ENCODE measurements at regions of chr1 and their contacts with region 1.

Region 1: GRCh38 chr1:61049850-61050540 is 32.4 kb upstream of the NFIA start:
- DNase-seq: peak; percentile 93
- ATAC-seq: peak; percentile 86
- H3K4me3 Mint-ChIP-seq: peak overlapping the region; percentile 65
- H3K27ac Mint-ChIP-seq: no peak overlapping the region
- H3K4me1 Mint-ChIP-seq: peaks cover 22% of the 10 kb centered on the region
- H3K27me3 Mint-ChIP-seq: peaks cover 46% of the 10 kb centered on the region

Region 2: GRCh38 chr1:61092642-61093041 is 42.6 kb after region 1 on chr1:
- CTCF ChIA-PET with region 1: interaction called, 19 read pairs
- POLR2A ChIA-PET with region 1: no interaction called
- intact Hi-C with region 1: no loop called
- DNase-seq: no peak
- ATAC-seq: no peak
- H3K4me3 Mint-ChIP-seq: no peak overlapping the region
- H3K27ac Mint-ChIP-seq: no peak overlapping the region
- H3K4me1 Mint-ChIP-seq: peaks cover 8% of the 10 kb centered on the region
- H3K27me3 Mint-ChIP-seq: peaks cover 5% of the 10 kb centered on the region

Region 3: DNA sequence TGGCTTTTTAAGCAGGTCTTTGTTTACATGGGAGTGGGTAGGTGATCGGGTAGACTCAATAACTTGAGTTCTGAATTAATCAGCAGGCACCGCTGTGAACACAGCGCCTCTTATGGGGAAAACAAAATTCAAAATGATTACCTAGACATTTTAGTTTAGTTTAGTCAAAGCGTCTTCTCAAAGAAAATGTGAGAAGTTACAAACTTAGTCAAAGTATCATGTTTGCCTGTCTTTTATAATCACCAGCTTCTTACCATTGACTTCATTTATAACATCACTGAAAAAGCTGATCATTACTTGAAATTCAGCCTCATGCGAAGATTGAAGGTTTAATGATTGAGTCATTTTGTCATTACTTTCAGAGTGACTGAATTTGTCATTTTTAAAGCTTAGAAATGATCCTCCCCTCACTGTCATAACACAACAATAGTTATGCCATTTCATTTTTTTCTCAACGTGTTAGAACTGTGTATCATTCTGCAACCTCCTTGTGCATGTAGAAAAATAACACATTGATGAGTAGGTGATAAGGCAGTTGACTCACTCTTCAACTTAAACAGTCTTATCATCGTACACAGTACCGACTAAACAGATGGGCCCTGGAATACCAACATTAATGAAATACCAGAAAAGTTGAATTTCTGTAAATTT is 220.9 kb after region 1 on chr1:
- CTCF ChIA-PET with region 1: interaction called, 8 read pairs
- POLR2A ChIA-PET with region 1: no interaction called
- intact Hi-C with region 1: loop called in 1 of 2 experiments (anchors 2 kb)
- DNase-seq: peak; percentile 49
- ATAC-seq: peak; percentile 86
- H3K4me3 Mint-ChIP-seq: no peak overlapping the region
- H3K27ac Mint-ChIP-seq: peak overlapping the region; percentile 76
- H3K4me1 Mint-ChIP-seq: peaks cover 40% of the 10 kb centered on the region
- H3K27me3 Mint-ChIP-seq: peaks cover 5% of the 10 kb centered on the region

Region 4: DNA sequence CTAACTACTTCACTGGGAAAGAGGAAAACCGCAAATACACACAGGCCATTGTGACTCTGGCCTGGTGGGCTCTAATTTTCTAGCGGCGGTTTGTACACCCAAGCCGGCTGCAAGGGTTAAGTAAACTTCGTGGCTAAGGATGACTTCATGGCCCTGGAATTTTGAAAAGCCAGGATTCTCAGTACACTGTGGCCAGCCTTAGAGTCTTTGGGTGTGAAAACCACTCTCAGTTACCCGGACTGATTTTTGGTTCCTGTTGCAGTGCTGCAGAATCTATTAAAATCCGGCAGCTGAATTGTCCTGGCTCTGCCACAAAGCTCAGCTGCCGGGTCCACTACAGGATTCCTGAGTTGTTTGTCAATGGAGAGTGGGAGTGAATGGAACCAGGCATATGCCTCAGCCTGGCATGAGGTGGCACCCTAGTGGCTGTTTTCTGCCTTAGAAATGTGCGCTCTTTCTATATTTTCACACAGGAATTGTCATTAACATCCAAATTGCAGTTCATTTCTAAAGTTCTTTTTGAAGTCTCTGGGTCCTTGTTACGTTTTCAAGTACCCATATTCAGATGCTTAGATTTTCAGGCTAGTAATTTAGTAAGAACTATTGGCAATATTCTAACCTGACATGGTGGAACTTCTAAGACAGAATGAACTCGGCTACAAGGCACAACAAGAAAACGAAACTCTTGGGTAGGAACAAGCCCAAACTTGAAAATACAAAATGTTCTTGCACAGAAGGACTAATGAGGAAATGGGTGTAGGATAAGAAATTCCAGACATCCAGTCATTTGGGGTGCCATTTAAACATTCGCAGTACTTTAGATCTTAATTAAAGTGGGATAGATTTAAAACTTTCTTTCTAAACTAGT is 288.2 kb after region 1 on chr1:
- CTCF ChIA-PET with region 1: no interaction called
- POLR2A ChIA-PET with region 1: no interaction called
- intact Hi-C with region 1: loop called (anchors 5 to 10 kb)
- DNase-seq: no peak
- ATAC-seq: no peak
- H3K4me3 Mint-ChIP-seq: no peak overlapping the region
- H3K27ac Mint-ChIP-seq: no peak overlapping the region
- H3K4me1 Mint-ChIP-seq: peaks cover under 1% of the 10 kb centered on the region
- H3K27me3 Mint-ChIP-seq: peaks cover 2% of the 10 kb centered on the region

Region 5: DNA sequence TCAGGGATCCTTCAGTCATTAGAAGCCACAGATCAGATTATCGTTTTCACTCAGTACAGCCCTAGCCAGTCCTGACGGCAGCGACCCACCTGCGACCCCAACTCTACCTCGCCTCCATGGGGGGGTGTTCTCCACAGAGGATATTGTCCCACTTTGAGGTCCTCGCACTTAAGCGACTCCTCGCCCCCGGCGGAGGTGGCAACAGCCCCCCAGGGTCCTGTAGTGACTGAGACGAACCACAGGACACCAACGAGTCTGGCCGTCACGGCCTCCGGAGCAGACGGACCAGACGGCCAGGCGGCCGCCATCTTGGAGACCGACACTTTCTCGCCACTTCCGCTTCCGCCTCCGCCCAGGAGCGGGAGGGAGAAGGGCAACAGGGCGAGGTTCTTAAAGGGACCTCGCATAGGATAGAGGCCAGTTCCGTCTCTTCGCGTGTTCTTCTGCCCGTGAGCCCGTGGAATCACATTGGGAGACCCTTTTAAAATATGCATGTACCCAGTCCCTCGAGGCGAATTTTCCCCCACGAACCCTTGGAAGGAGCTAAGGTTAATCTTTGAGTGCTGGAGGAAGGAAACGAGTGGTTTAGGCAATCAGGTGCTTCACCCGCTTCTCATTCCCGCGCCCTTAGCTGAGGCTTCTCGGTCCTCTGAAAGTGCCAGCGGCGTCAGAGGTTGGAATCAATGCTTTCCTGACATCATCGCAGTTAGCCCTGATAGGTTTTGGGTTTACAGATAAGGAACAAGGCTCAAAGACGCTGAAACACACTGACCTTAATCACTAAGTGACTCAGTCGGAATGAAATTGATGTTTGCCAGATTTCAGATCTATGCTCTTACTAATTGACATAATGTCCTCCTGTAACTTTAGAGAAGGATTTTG is 675.1 kb after region 1 on chr1 and contains the start of gene TM2D1:
- CTCF ChIA-PET with region 1: no interaction called
- POLR2A ChIA-PET with region 1: no interaction called
- intact Hi-C with region 1: loop called in 1 of 2 experiments (anchors 10 kb)
- DNase-seq: peak; percentile 92
- ATAC-seq: peak; percentile 93
- H3K4me3 Mint-ChIP-seq: peak within 1 kb of the TSS; percentile 97
- H3K27ac Mint-ChIP-seq: peak within 1 kb of the TSS; percentile 98
- H3K4me1 Mint-ChIP-seq: peaks cover 17% of the 10 kb centered on the region
- H3K27me3 Mint-ChIP-seq: no peaks in the 10 kb centered on the region
- total RNA-seq, gene TM2D1: 20.8 to 26.4 TPM

Measured in activated CD4-positive, alpha-beta T cell treated with anti-CD3 and anti-CD28 coated beads for 36 hours (primary cell).